Heart right ventricle (tissue), 16 donors: ENCODE measurements at regions of chrX and their contacts with region 1.

Region 1: DNA sequence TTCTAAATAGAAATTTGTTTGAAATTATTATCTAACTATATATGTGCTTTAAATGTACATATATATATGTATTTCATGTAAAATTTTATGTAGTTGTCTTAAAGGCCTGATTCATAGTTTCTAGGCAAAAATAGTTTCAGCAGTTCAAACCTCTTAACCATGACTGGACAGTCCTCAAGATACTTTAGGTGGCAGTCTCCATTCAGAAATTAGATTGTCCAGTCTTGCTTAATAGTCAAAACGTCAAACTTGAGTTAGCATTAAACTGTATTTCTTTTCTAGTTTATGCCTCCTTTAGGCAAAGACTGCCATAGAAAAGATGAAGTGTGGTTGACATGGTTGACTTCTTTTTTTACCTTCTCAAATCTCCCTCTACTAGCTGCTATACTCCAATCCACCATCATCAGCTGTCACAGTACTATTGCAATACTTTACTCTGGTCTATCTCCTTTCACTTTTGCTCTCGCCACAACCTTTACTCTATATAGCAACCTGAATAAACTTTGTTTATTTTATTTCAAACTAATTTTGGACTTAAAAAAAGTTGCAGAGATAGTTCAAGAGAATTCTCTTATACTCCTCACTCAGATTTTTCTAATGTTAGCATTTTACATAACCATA is 395.6 kb upstream of the DIPK2B start:
- DNase-seq: no peak
- ATAC-seq: no peak
- H3K4me3 ChIP-seq: no peak overlapping the region
- H3K27ac ChIP-seq: no peak overlapping the region
- H3K4me1 ChIP-seq: no peaks in the 10 kb centered on the region
- H3K27me3 ChIP-seq: peaks cover 0 to 47% (median 0%) of the 10 kb centered on the region in 7 donors
- CTCF ChIP-seq: peak in 3 of 9 donors; percentile 8 to 25 (median 20)

Region 2: GRCh38 chrX:45240301-45240700 is 356.0 kb before region 1 on chrX:
- intact Hi-C with region 1: no loop called
- DNase-seq: no peak
- ATAC-seq: no peak
- H3K4me3 ChIP-seq: no peak overlapping the region
- H3K27ac ChIP-seq: no peak overlapping the region
- H3K4me1 ChIP-seq: no peaks in the 10 kb centered on the region
- H3K27me3 ChIP-seq: peaks cover 0 to 29% (median 0%) of the 10 kb centered on the region in 7 donors
- CTCF ChIP-seq: no peak

Region 3: DNA sequence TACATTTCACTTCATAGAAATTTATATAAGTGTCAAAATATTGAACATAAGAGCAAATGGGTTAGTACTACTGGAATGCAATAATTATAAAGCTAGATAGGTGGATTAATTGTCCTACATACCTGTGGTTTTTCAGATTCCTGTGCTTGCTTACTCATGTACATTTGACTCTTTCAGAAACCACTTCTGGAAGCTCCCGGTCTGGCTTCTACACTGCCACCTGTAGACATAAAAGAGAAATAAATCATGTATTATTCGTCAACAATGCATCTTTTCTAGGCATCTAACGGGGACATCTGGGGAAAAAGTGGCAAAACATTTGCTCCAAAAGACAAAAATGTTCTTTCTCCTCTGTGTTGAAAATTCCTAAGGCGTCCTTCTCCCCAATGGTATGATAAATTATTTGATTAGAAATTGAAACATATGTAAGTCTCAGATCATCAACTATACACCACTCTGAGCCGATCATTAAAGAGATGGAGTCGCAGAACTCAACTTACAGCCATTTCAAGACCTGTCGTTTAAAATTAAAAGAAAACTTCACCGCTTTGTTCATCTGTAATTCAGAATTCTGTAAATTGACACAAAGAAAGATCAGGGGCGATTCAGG is 253.1 kb after region 1 on chrX:
- intact Hi-C with region 1: loop called in 1 of 10 experiments (anchors 10 kb)
- DNase-seq: peak in 1 of 2 donors; percentile 2
- ATAC-seq: no peak
- H3K4me3 ChIP-seq: peak overlapping the region in 2 of 10 donors; percentile 5 to 12
- H3K27ac ChIP-seq: no peak overlapping the region
- H3K4me1 ChIP-seq: peaks cover 0 to 5% (median 0%) of the 10 kb centered on the region in 9 donors
- H3K27me3 ChIP-seq: peaks cover 0 to 87% (median 0%) of the 10 kb centered on the region in 7 donors
- CTCF ChIP-seq: peak in 7 of 9 donors; percentile 8 to 49 (median 40)